AG04450 (cell line): ENCODE measurements at regions of chr10 and their contacts with region 1.

Region 1: DNA sequence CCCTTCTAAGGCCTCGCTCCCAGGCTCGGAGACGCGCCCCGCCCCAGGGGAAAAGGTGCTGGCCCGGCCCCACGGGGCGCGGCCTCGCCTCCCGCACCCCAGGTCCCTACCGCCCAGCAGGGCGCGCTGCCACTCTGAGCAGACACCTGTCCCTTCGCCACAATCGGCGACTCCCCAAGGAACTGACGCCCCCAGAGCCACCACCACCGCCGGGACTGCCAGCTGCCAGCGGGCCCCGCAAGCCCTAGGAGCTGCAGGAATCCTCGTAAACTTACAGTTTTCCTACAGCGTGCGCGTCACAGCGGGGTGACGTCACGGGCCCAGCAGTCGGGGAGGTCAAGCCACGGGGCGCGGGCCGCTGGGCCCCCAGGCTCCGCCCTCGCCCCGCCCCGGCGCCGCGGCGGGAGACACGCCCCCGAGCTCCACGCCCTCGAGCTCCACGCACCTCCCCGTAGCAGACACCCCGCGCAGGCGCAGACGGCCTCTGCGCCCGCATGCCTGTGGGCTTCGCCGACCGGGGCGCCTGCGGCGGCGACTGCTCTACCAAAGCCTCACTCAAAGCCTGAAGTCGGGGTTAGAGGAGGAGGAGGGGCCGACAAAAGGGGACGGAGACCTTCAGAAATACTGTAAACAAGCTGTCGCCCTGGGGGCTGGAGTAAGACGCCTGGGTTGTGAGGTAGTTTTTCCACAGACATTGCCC is at the start of gene ZNF438:
- DNase-seq: peak; percentile 89
- H3K4me3 ChIP-seq: peak within 1 kb of the TSS; percentile 68
- H3K27ac ChIP-seq: peak within 1 kb of the TSS; percentile 100
- H3K27me3 ChIP-seq: no peaks in the 10 kb centered on the region
- CTCF ChIP-seq: peak; percentile 40; the same call in 1 of the 2 replicates
- polyA plus RNA-seq, gene ZNF438: 4.4 and 5.0 TPM in 2 replicates

Region 2: GRCh38 chr10:30736685-30737232 is 294.9 kb before region 1 on chr10:
- CTCF ChIA-PET with region 1: no interaction called
- POLR2A ChIA-PET with region 1: interaction called, 11 read pairs
- DNase-seq: peak; percentile 99
- H3K4me3 ChIP-seq: no peak overlapping the region
- H3K27ac ChIP-seq: peak overlapping the region; percentile 95
- H3K27me3 ChIP-seq: no peaks in the 10 kb centered on the region
- CTCF ChIP-seq: no peak

Region 3: GRCh38 chr10:30783939-30784500 is 247.7 kb before region 1 on chr10:
- CTCF ChIA-PET with region 1: interaction called, 12 read pairs
- POLR2A ChIA-PET with region 1: interaction called, 13 read pairs
- DNase-seq: peak; percentile 81
- H3K4me3 ChIP-seq: no peak overlapping the region
- H3K27ac ChIP-seq: peak overlapping the region; percentile 87
- H3K27me3 ChIP-seq: no peaks in the 10 kb centered on the region
- CTCF ChIP-seq: peak; percentile 95

Region 4: GRCh38 chr10:30980951-30981616 is 50.6 kb before region 1 on chr10:
- CTCF ChIA-PET with region 1: no interaction called
- POLR2A ChIA-PET with region 1: interaction called, 12 read pairs
- DNase-seq: no peak
- H3K4me3 ChIP-seq: no peak overlapping the region
- H3K27ac ChIP-seq: no peak overlapping the region
- H3K27me3 ChIP-seq: no peaks in the 10 kb centered on the region
- CTCF ChIP-seq: no peak

Region 5: DNA sequence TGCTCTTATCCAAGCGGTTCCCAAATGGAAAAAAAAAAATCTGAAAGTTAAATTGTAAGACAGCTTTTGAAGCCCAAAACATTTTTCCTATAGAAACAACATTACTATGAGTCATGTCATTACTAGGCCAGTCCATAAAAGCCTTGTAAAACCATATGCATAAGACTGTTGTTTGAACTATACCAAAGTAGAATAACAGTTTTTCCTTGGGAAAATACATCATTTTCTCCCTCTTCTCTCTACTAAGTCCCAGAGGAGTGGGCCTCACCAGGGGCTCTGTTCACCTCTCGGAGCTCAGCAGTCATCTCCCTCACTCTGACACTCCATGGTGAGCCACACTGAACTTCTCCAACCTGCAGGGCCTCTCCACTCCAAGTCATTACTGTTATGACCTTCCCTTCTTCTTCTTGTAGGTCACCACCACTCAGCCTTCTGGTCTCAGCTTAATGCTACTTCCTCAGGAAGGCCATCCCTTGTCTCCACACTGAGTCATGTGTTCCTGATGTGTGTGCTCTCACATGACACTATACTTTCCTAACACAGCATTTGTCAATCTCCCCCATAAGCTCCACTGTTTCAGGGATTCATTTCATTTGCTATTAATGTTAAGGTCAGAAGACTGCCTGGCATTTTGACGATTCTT is 32.5 kb before region 1 on chr10:
- CTCF ChIA-PET with region 1: interaction called, 3 read pairs
- POLR2A ChIA-PET with region 1: interaction called, 11 read pairs
- DNase-seq: no peak
- H3K4me3 ChIP-seq: peak overlapping the region; percentile 34
- H3K27ac ChIP-seq: peak overlapping the region; percentile 85
- H3K27me3 ChIP-seq: no peaks in the 10 kb centered on the region
- CTCF ChIP-seq: no peak

Region 6: GRCh38 chr10:31133628-31134302 is 102.1 kb after region 1 on chr10:
- CTCF ChIA-PET with region 1: no interaction called
- POLR2A ChIA-PET with region 1: interaction called, 15 read pairs
- DNase-seq: no peak
- H3K4me3 ChIP-seq: peak overlapping the region; percentile 25
- H3K27ac ChIP-seq: peak overlapping the region; percentile 98
- H3K27me3 ChIP-seq: no peaks in the 10 kb centered on the region
- CTCF ChIP-seq: no peak

Region 7: GRCh38 chr10:31549896-31550295 is 518.2 kb after region 1 on chr10:
- CTCF ChIA-PET with region 1: no interaction called
- POLR2A ChIA-PET with region 1: no interaction called
- DNase-seq: no peak
- H3K4me3 ChIP-seq: no peak overlapping the region
- H3K27ac ChIP-seq: no peak overlapping the region
- H3K27me3 ChIP-seq: peaks cover 11% of the 10 kb centered on the region
- CTCF ChIP-seq: no peak